ENCODE measurements at regions of chr6 and their contacts with region 1.

Region 1: DNA sequence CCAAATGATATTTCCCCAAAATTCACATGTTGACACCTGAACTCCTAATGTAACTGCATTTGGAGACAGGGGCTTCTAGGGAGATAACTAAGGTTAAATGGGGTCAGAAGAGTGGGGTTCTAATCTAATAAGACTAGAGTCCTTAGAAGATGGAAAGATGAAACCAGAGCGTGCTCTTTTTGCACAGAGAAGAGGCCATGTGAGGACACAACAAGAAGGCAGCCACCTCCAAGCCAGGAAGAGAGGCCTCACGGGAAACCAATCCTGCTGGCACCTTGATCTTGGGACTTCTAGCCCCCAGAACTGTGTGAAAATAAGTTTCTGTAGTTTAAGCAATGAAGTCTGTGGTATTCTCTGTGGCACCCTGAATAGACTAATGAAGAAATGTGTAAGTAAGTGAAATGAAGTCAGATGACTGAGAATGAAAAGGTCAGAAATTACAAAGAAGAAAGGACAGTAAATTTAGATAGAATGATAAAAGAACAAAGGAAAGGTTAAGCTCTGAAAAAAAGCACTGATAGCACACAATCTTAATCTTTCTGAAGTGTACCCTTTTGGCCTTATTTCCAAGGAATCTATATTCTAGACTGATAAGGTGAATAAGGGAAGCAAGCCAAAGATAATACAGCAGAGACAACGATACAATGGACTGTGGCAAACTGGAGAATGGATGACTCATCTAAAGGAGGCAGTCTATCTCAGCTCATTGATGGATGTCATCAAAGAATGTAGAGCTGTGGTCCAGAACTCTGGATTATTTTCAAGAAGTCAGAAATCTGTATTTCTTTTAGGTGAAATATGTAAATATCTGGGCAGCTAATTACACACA is 110.4 kb downstream of the MYB start:
- DNase-seq: no peak
- H3K4me3 Mint-ChIP-seq: no peak overlapping the region
- H3K27ac Mint-ChIP-seq: no peak overlapping the region
- H3K4me1 Mint-ChIP-seq: peaks cover 21% of the 10 kb centered on the region
- H3K27me3 Mint-ChIP-seq: no peaks in the 10 kb centered on the region

Region 2: DNA sequence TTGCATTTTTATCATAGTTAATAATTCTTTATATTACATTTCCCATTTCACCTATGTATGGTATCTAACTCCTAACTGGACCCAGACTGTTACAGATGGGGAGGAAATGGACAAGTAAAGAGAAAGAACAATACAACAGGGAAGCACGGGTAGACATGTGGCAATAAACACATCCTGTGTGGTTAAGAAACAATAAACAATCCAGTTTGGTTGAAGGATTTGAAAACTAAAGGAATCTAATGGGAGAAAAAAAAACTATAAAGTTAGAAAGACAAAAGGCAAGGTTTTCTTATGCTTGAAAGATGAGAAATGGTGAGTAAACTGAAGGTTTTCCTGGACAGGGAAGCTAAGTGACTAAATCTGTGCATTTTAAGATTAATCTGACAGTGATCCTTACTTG is 306.7 kb before region 1 on chr6:
- intact Hi-C with region 1: loop called (anchors 5 kb)
- DNase-seq: no peak
- H3K4me3 Mint-ChIP-seq: no peak overlapping the region
- H3K27ac Mint-ChIP-seq: no peak overlapping the region
- H3K4me1 Mint-ChIP-seq: peaks cover 50% of the 10 kb centered on the region
- H3K27me3 Mint-ChIP-seq: no peaks in the 10 kb centered on the region

Region 3: GRCh38 chr6:135212020-135212806 is 79.3 kb before region 1 on chr6:
- intact Hi-C with region 1: loop called (anchors 5 kb)
- DNase-seq: no peak
- H3K4me3 Mint-ChIP-seq: peak overlapping the region; percentile 38
- H3K27ac Mint-ChIP-seq: peak overlapping the region; percentile 88
- H3K4me1 Mint-ChIP-seq: peaks cover 51% of the 10 kb centered on the region
- H3K27me3 Mint-ChIP-seq: no peaks in the 10 kb centered on the region

Measured in activated T-helper 2 cell treated with anti-CD3 and anti-CD28 coated beads, Interferon-gamma antibody, Interleukin-2, Interleukin-4, amounts not matched to agents 10 μg/mL and 5 μg/mL and 100 μg/mL, durations not matched to agents 14 hours and 24 hours and 36 hours (primary cell).